Naive thymus-derived CD4-positive, alpha-beta T cell (primary cell): ENCODE measurements at regions of chr9 and their contacts with region 1.

Region 1: GRCh38 chr9:5799314-5799713 is 33.6 kb downstream of the ERMP1 start:
- DNase-seq: peak in 5 of 9 donors; percentile 7 to 34 (median 21)
- ATAC-seq: peak; percentile 38
- H3K4me3 ChIP-seq: no peak overlapping the region
- H3K4me3 Mint-ChIP-seq: peak overlapping the region in 2 of 10 donors; percentile 6 to 23
- H3K27ac ChIP-seq: no peak overlapping the region
- H3K27ac Mint-ChIP-seq: peak overlapping the region in 4 of 9 donors; percentile 40 to 67 (median 58)
- H3K4me1 ChIP-seq: peaks cover 5% of the 10 kb centered on the region in 2 donors
- H3K4me1 Mint-ChIP-seq: peaks cover 4 to 36% (median 23%) of the 10 kb centered on the region in 7 donors
- H3K27me3 ChIP-seq: no peaks in the 10 kb centered on the region
- H3K27me3 Mint-ChIP-seq: no peaks in the 10 kb centered on the region

Region 2: DNA sequence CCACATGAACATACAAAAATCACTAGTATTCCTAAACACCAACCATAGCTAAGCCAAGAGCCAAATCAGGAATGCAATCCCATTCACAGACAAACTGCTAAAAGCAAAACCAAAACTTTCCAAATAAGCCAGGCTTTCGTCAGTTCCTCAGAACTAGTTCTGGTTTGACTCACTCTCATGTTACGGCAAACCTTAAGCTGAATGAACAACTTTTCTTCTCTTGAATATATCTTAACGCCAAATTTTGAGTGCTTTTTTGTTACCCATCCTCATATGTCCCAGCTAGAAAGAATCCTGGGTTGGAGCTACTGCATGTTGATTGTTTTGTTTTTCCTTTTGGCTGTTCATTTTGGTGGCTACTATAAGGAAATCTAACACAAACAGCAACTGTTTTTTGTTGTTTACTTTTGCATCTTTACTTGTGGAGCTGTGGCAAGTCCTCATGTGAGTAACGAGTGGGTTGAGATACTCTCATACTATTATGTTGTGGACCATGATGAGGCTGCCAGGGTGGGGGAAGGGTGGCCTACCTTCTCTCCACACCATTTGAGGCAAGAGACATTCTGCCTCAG is 288.9 kb before region 1 on chr9 and contains the start of gene PDCD1LG2:
- CTCF ChIA-PET with region 1: no interaction called
- POLR2A ChIA-PET with region 1: no interaction called
- intact Hi-C with region 1: no loop called
- DNase-seq: peak in 1 of 9 donors; percentile 56
- ATAC-seq: peak; percentile 67
- H3K4me3 ChIP-seq: peak within 1 kb of the TSS; percentile 24
- H3K4me3 Mint-ChIP-seq: peak within 1 kb of the TSS; percentile 43 to 91 (median 66)
- H3K27ac ChIP-seq: no peak within 1 kb of the TSS
- H3K27ac Mint-ChIP-seq: peak within 1 kb of the TSS; percentile 63 to 97 (median 82)
- H3K4me1 ChIP-seq: peaks cover 0 to 8% of the 10 kb centered on the region in 2 donors
- H3K4me1 Mint-ChIP-seq: peaks cover 16 to 59% (median 18%) of the 10 kb centered on the region in 7 donors
- H3K27me3 ChIP-seq: no peaks in the 10 kb centered on the region
- H3K27me3 Mint-ChIP-seq: peaks cover 0 to 2% (median 0%) of the 10 kb centered on the region in 5 donors
- total RNA-seq, gene PDCD1LG2: 0.16 to 7.4 (median 0.32) TPM

Region 3: DNA sequence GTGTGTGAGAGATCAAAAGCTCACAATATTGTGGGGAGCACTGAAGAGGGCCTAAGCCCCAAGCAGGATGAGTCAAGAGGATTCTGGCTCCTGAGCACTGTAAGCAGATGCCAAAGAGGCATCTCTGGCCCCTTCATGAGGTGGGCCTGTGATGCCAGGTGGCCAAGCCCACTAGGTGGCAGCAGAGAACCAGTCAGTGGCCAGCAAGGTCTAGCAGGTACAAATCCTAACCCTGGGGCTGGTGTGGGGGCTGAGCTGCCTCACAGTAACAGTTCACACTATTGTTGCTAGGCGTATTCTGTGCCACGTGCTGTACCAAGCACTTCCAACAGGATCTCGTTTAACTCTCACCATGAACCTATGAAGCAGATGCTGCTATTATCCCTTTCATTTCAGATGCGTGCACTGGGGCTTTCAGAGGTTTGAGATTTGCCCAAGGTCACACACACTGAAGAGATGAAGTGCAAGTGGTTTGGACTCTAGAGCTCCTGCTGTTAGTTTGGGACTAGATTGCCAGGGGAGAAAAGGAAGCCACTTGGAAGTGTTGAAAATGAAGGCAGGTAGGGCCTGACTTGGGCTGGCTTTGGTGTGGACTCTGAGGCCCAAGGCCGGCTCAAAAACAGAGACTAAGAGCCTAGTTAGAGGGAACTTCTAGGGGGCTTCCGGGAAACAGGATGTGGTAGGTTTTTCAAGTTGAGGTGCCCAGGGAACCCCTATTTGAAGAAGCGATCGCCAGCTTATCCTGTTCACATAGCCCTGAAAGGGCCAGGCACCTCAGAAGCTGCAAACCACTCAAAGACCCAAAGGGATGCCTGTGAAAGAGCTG is 87.0 kb after region 1 on chr9:
- CTCF ChIA-PET with region 1: interaction called, 8 read pairs
- POLR2A ChIA-PET with region 1: no interaction called
- intact Hi-C with region 1: loop called in 1 of 2 experiments (anchors 1 kb)
- DNase-seq: peak; percentile 45 to 80 (median 64)
- ATAC-seq: peak; percentile 94
- H3K4me3 ChIP-seq: no peak overlapping the region
- H3K4me3 Mint-ChIP-seq: no peak overlapping the region
- H3K27ac ChIP-seq: no peak overlapping the region
- H3K27ac Mint-ChIP-seq: peak overlapping the region in 4 of 9 donors; percentile 11 to 64 (median 34)
- H3K4me1 ChIP-seq: peaks cover 0 to 3% of the 10 kb centered on the region in 2 donors
- H3K4me1 Mint-ChIP-seq: peaks cover 0 to 14% (median 7%) of the 10 kb centered on the region in 7 donors
- H3K27me3 ChIP-seq: no peaks in the 10 kb centered on the region
- H3K27me3 Mint-ChIP-seq: no peaks in the 10 kb centered on the region

Region 4: GRCh38 chr9:5899292-5899691 is 100.0 kb after region 1 on chr9:
- CTCF ChIA-PET with region 1: interaction called, 4 read pairs
- POLR2A ChIA-PET with region 1: no interaction called
- intact Hi-C with region 1: loop called in 1 of 2 experiments (anchors 1 kb)
- DNase-seq: peak in 1 of 9 donors; percentile 13
- ATAC-seq: no peak
- H3K4me3 ChIP-seq: no peak overlapping the region
- H3K4me3 Mint-ChIP-seq: no peak overlapping the region
- H3K27ac ChIP-seq: no peak overlapping the region
- H3K27ac Mint-ChIP-seq: peak overlapping the region in 1 of 9 donors; percentile 50
- H3K4me1 ChIP-seq: no peaks in the 10 kb centered on the region
- H3K4me1 Mint-ChIP-seq: peaks cover 0 to 9% (median 0%) of the 10 kb centered on the region in 7 donors
- H3K27me3 ChIP-seq: no peaks in the 10 kb centered on the region
- H3K27me3 Mint-ChIP-seq: no peaks in the 10 kb centered on the region

Region 5: GRCh38 chr9:6049798-6050197 is 250.5 kb after region 1 on chr9:
- CTCF ChIA-PET with region 1: interaction called, 8 read pairs
- POLR2A ChIA-PET with region 1: no interaction called
- intact Hi-C with region 1: loop called (anchors 1 kb)
- DNase-seq: peak in 3 of 9 donors; percentile 6 to 34 (median 11)
- ATAC-seq: peak; percentile 70
- H3K4me3 ChIP-seq: no peak overlapping the region
- H3K4me3 Mint-ChIP-seq: peak overlapping the region in 1 of 10 donors; percentile 5
- H3K27ac ChIP-seq: no peak overlapping the region
- H3K27ac Mint-ChIP-seq: no peak overlapping the region
- H3K4me1 ChIP-seq: no peaks in the 10 kb centered on the region
- H3K4me1 Mint-ChIP-seq: peaks cover 0 to 9% (median 5%) of the 10 kb centered on the region in 7 donors
- H3K27me3 ChIP-seq: no peaks in the 10 kb centered on the region
- H3K27me3 Mint-ChIP-seq: peaks cover 5 to 9% (median 6%) of the 10 kb centered on the region in 5 donors

Region 6: GRCh38 chr9:6305954-6306563 is 506.7 kb after region 1 on chr9:
- CTCF ChIA-PET with region 1: no interaction called
- POLR2A ChIA-PET with region 1: no interaction called
- intact Hi-C with region 1: loop called (anchors 1 to 10 kb)
- DNase-seq: peak in 5 of 9 donors; percentile 4 to 19 (median 13)
- ATAC-seq: no peak
- H3K4me3 ChIP-seq: no peak overlapping the region
- H3K4me3 Mint-ChIP-seq: no peak overlapping the region
- H3K27ac ChIP-seq: no peak overlapping the region
- H3K27ac Mint-ChIP-seq: no peak overlapping the region
- H3K4me1 ChIP-seq: no peaks in the 10 kb centered on the region
- H3K4me1 Mint-ChIP-seq: no peaks in the 10 kb centered on the region
- H3K27me3 ChIP-seq: peaks cover 0 to 4% of the 10 kb centered on the region in 2 donors
- H3K27me3 Mint-ChIP-seq: peaks cover 5 to 22% (median 12%) of the 10 kb centered on the region in 5 donors

Region 7: GRCh38 chr9:6616951-6617602 is 817.8 kb after region 1 on chr9:
- CTCF ChIA-PET with region 1: no interaction called
- POLR2A ChIA-PET with region 1: no interaction called
- intact Hi-C with region 1: no loop called
- DNase-seq: no peak
- ATAC-seq: no peak
- H3K4me3 ChIP-seq: no peak overlapping the region
- H3K4me3 Mint-ChIP-seq: no peak overlapping the region
- H3K27ac ChIP-seq: no peak overlapping the region
- H3K27ac Mint-ChIP-seq: no peak overlapping the region
- H3K4me1 ChIP-seq: no peaks in the 10 kb centered on the region
- H3K4me1 Mint-ChIP-seq: no peaks in the 10 kb centered on the region
- H3K27me3 ChIP-seq: no peaks in the 10 kb centered on the region
- H3K27me3 Mint-ChIP-seq: peaks cover 0 to 5% (median 4%) of the 10 kb centered on the region in 5 donors